Motor neuron (in vitro differentiated cells): ENCODE measurements at regions of chr4 and their contacts with region 1.

Region 1: GRCh38 chr4:111854494-111855087 is 290.7 kb upstream of the FAM241A start:
- ATAC-seq: peak in 5 of 8 experiments; percentile 43 to 75 (median 51)
- H3K4me3 ChIP-seq: no peak overlapping the region
- H3K27ac ChIP-seq: no peak overlapping the region
- H3K4me1 ChIP-seq: no peaks in the 10 kb centered on the region

Region 2: GRCh38 chr4:110663738-110664444 is 1190.7 kb before region 1 on chr4:
- in situ Hi-C with region 1: no loop called
- ATAC-seq: no peak
- H3K4me3 ChIP-seq: no peak overlapping the region
- H3K27ac ChIP-seq: no peak overlapping the region
- H3K4me1 ChIP-seq: no peaks in the 10 kb centered on the region

Region 3: GRCh38 chr4:111631215-111631999 is 223.2 kb before region 1 on chr4:
- in situ Hi-C with region 1: loop called in 4 of 9 experiments (anchors 10 to 25 kb)
- ATAC-seq: peak in 5 of 8 experiments; percentile 12 to 87 (median 46)
- H3K4me3 ChIP-seq: no peak overlapping the region
- H3K27ac ChIP-seq: no peak overlapping the region
- H3K4me1 ChIP-seq: peaks cover 2 to 8% of the 10 kb centered on the region in 2 donors

Region 4: DNA sequence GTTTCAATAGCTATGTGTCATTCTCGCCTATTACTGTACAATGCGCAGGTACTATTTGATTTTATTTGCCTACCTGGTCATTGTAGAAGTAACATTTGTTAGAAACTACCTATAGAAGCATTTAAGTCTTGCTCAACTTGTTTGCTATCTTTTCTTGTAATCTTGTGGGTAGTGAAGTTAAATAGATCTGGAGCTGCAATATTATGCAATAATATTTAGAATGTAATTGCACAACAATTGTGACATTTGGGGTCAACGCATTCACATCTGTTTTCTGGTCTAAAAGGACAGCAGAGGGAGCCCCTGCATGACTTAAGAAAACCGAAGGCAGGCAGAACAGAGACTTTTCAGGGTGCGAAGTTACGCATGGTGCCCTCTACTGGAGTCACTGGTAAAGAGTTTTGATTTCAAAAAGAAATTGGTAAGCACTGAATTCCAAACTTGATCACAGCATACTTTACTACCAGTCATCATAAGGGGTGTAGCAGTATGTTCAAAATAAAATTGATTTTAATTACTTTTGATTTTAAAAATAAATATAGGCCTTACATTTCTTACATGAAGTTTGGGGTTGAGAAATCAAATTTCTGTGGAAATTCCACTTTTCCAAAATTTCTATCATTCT is 212.5 kb before region 1 on chr4:
- in situ Hi-C with region 1: loop called in 6 of 9 experiments (anchors 5 to 25 kb)
- ATAC-seq: peak; percentile 40 to 93 (median 75)
- H3K4me3 ChIP-seq: no peak overlapping the region
- H3K27ac ChIP-seq: no peak overlapping the region
- H3K4me1 ChIP-seq: no peaks in the 10 kb centered on the region

Region 5: DNA sequence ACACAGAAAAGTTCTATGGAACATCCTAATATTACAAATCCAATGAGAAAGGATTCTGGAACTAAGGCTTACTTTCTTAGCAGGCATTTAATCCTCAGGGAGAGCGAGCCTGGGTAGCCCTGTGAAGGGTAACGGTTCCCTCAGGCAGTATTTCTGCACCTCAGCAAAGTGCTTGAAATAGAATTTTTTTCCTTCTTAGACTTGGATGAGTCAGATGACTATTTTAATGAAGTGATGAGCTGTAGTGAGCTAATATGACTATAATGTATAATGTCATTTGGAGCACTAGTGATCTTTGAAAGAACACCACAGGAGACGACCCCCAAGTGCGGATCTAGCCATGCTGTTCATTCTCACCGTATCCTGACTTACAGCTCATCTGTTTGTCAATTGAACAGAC is 202.4 kb before region 1 on chr4:
- in situ Hi-C with region 1: loop called in 5 of 9 experiments (anchors 10 to 25 kb)
- ATAC-seq: peak in 6 of 8 experiments; percentile 22 to 99 (median 74)
- H3K4me3 ChIP-seq: no peak overlapping the region
- H3K27ac ChIP-seq: no peak overlapping the region
- H3K4me1 ChIP-seq: no peaks in the 10 kb centered on the region

Region 6: GRCh38 chr4:111678479-111678878 is 176.1 kb before region 1 on chr4:
- in situ Hi-C with region 1: no loop called
- ATAC-seq: peak in 3 of 8 experiments; percentile 59 to 88 (median 86)
- H3K4me3 ChIP-seq: no peak overlapping the region
- H3K27ac ChIP-seq: no peak overlapping the region
- H3K4me1 ChIP-seq: no peaks in the 10 kb centered on the region

Region 7: GRCh38 chr4:112031712-112032328 is 177.2 kb after region 1 on chr4:
- in situ Hi-C with region 1: loop called in 2 of 9 experiments (anchors 25 kb)
- ATAC-seq: peak in 4 of 8 experiments; percentile 63 to 83 (median 70)
- H3K4me3 ChIP-seq: no peak overlapping the region
- H3K27ac ChIP-seq: no peak overlapping the region
- H3K4me1 ChIP-seq: no peaks in the 10 kb centered on the region